HCT116 (cell line): ENCODE measurements at regions of chr1 and their contacts with region 1.

Region 1: GRCh38 chr1:32448773-32449456 is 16.0 kb upstream of the ZBTB8B start:
- DNase-seq: peak; percentile 68
- ATAC-seq: peak; percentile 79
- H3K4me3 ChIP-seq: peak overlapping the region; percentile 16 to 36
- H3K27ac ChIP-seq: peak overlapping the region; percentile 47
- H3K4me1 ChIP-seq: peaks cover 22 to 36% of the 10 kb centered on the region in 2 experiments
- H3K27me3 ChIP-seq: no peaks in the 10 kb centered on the region
- CTCF ChIP-seq: peak; percentile 55 to 79 (median 69); a peak in 5 of 6 replicates
- POLR2A ChIP-seq: peak; percentile 91
- RAD21 ChIP-seq: peak; percentile 70

Region 2: GRCh38 chr1:32186077-32186476 is 262.8 kb before region 1 on chr1:
- CTCF ChIA-PET with region 1: no interaction called
- POLR2A ChIA-PET with region 1: no interaction called
- RAD21 ChIA-PET with region 1: no interaction called
- intact Hi-C with region 1: no loop called
- DNase-seq: no peak
- ATAC-seq: no peak
- H3K4me3 ChIP-seq: no peak overlapping the region
- H3K27ac ChIP-seq: no peak overlapping the region
- H3K4me1 ChIP-seq: peaks cover 2 to 11% of the 10 kb centered on the region in 2 experiments
- H3K27me3 ChIP-seq: no peaks in the 10 kb centered on the region
- CTCF ChIP-seq: no peak
- POLR2A ChIP-seq: no peak
- RAD21 ChIP-seq: no peak

Region 3: GRCh38 chr1:32500387-32501209 is 51.7 kb after region 1 on chr1:
- CTCF ChIA-PET with region 1: interaction called, 3 read pairs
- POLR2A ChIA-PET with region 1: interaction called, 6 read pairs
- RAD21 ChIA-PET with region 1: no interaction called
- intact Hi-C with region 1: loop called (anchors 5 kb)
- DNase-seq: no peak
- ATAC-seq: peak; percentile 89
- H3K4me3 ChIP-seq: peak overlapping the region; percentile 59 to 66
- H3K27ac ChIP-seq: peak overlapping the region; percentile 94
- H3K4me1 ChIP-seq: peaks cover 9 to 17% of the 10 kb centered on the region in 2 experiments
- H3K27me3 ChIP-seq: no peaks in the 10 kb centered on the region
- CTCF ChIP-seq: no peak
- POLR2A ChIP-seq: peak; percentile 17
- RAD21 ChIP-seq: no peak

Region 4: DNA sequence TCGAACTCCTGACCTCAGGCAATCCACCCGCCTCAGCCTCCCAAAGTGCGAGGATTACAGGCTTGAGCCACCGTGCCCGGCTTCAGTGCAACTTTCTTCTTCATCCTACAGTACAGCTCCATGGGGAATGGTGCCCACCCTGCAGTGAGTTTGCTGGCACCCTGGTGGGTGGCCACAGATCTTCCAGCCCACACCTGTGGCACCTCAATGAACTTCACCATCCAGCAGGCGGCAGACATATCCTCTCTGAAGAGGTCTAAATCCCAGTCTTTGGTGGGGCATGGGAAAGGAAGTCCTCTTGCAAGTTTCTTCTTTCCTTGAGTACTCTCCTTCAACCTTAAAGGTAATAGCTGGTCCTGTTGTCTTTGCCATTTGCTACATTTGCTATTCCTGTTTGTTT is 72.2 kb after region 1 on chr1:
- CTCF ChIA-PET with region 1: interaction called, 14 read pairs
- POLR2A ChIA-PET with region 1: interaction called, 3 read pairs
- RAD21 ChIA-PET with region 1: interaction called in 1 of 2 experiments, 5 read pairs
- intact Hi-C with region 1: no loop called
- DNase-seq: no peak
- ATAC-seq: peak; percentile 43
- H3K4me3 ChIP-seq: no peak overlapping the region
- H3K27ac ChIP-seq: no peak overlapping the region
- H3K4me1 ChIP-seq: peaks cover 7 to 8% of the 10 kb centered on the region in 2 experiments
- H3K27me3 ChIP-seq: no peaks in the 10 kb centered on the region
- CTCF ChIP-seq: no peak
- POLR2A ChIP-seq: no peak
- RAD21 ChIP-seq: 0 out of 2 replicates have a peak, but pooled peaks have one; percentile 15

Region 5: GRCh38 chr1:32538887-32539583 is 90.1 kb after region 1 on chr1 and contains the start of gene ZBTB8A:
- CTCF ChIA-PET with region 1: no interaction called
- POLR2A ChIA-PET with region 1: no interaction called
- RAD21 ChIA-PET with region 1: no interaction called
- intact Hi-C with region 1: loop called (anchors 5 kb)
- DNase-seq: peak; percentile 54
- ATAC-seq: peak; percentile 70
- H3K4me3 ChIP-seq: peak within 1 kb of the TSS; percentile 68 to 78
- H3K27ac ChIP-seq: peak within 1 kb of the TSS; percentile 88
- H3K4me1 ChIP-seq: peaks cover 15 to 23% of the 10 kb centered on the region in 2 experiments
- H3K27me3 ChIP-seq: no peaks in the 10 kb centered on the region
- CTCF ChIP-seq: no peak
- POLR2A ChIP-seq: peak; percentile 67
- RAD21 ChIP-seq: no peak
- total RNA-seq, gene ZBTB8A: 9.7 TPM

Region 6: DNA sequence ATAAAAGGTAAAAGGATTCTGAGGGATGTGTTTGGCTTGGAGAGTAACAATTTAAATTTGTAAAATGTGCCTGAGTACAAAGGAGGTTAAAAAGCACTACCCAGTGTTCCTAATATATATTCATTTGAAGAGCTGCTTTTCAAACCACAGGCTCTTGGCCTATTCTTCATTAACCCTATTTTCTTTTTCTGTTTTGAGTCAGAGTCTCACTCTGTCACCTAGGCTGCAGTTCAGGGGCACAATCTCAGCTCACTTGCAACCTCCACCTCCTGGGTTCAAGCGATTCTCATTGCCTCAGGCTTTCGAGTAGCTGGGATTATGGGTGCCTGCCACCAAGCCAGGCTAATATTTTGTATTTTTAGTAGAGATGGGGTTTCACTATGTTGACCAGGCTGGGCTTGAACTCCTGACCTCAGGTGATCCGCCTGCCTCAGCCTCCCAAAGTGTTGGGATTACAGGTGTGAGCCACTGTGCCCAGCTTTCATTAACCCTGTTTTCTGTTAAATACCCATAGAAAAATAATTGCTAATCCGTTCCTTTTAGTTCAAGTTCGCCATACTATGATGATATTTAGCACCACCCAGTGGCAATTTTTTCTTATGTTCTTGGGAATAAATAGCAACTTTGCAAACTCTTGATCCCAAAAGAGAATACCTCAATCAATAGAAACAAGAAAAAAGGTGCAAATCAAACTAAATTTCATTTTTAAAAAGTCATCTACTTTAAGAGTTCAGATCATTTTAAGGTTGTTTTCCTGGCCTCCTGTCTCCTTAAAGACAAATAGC is 171.0 kb after region 1 on chr1:
- CTCF ChIA-PET with region 1: interaction called, 5 read pairs
- POLR2A ChIA-PET with region 1: no interaction called
- RAD21 ChIA-PET with region 1: no interaction called
- intact Hi-C with region 1: loop called (anchors 1 kb)
- DNase-seq: no peak
- ATAC-seq: no peak
- H3K4me3 ChIP-seq: no peak overlapping the region
- H3K27ac ChIP-seq: no peak overlapping the region
- H3K4me1 ChIP-seq: no peaks in the 10 kb centered on the region
- H3K27me3 ChIP-seq: no peaks in the 10 kb centered on the region
- CTCF ChIP-seq: peak in 2 of 3 experiments; percentile 40 to 44; a peak in 3 of 6 replicates
- POLR2A ChIP-seq: no peak
- RAD21 ChIP-seq: peak; percentile 55

Region 7: GRCh38 chr1:32650752-32651460 is 202.0 kb after region 1 on chr1 and contains the start of gene RBBP4:
- CTCF ChIA-PET with region 1: interaction called, 6 read pairs
- POLR2A ChIA-PET with region 1: interaction called, 8 read pairs
- RAD21 ChIA-PET with region 1: no interaction called
- intact Hi-C with region 1: loop called (anchors 1 kb)
- DNase-seq: peak; percentile 91
- ATAC-seq: peak; percentile 90
- H3K4me3 ChIP-seq: peak within 1 kb of the TSS; percentile 89 to 99
- H3K27ac ChIP-seq: peak within 1 kb of the TSS; percentile 95
- H3K4me1 ChIP-seq: peaks cover 11 to 25% of the 10 kb centered on the region in 2 experiments; a peak in 3 of 4 replicates
- H3K27me3 ChIP-seq: no peaks in the 10 kb centered on the region
- CTCF ChIP-seq: no peak
- POLR2A ChIP-seq: peak; percentile 14
- RAD21 ChIP-seq: no peak
- total RNA-seq, gene RBBP4: 279 TPM

Region 8: DNA sequence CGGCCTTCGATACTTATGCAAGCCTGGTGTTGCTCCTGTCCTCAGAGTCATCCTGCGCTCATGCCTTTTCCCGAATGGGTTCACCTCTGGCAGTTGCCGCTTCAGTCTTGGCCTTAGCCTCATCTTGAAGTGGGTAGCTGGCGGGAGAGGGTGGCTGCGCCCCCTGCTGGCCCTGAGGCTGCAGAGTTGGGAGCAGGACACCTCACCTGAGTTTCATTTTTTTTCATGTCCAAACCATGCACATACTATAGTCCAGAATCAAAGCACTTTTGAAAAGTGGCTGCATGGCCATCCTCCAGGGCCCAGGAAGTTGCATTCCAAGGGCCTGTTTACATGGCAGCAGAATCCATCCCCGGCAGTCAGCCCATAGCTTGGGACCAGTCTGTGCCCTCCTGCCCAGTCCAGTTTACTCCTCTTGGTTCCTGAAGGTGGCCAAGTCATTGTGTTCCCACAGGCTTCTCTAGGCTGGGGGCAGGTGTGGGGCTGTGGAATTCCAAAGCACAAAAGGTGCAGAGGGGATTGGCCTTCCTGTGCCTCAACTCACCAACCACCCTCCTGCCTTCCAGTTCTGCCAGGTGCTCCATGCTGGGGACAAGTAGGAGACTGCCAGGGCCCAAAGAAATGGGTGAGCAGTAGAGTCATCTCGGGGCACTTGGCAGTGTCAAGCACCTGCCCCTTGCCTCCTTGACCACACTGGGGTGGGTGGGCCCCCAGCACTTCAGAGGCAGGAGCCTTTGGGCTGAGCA is 324.3 kb after region 1 on chr1:
- CTCF ChIA-PET with region 1: interaction called, 3 read pairs
- POLR2A ChIA-PET with region 1: interaction called, 3 read pairs
- RAD21 ChIA-PET with region 1: no interaction called
- intact Hi-C with region 1: loop called (anchors 2 kb)
- DNase-seq: peak; percentile 61
- ATAC-seq: peak; percentile 85
- H3K4me3 ChIP-seq: no peak overlapping the region
- H3K27ac ChIP-seq: peak overlapping the region; percentile 25
- H3K4me1 ChIP-seq: peaks cover 22 to 39% of the 10 kb centered on the region in 2 experiments
- H3K27me3 ChIP-seq: no peaks in the 10 kb centered on the region
- CTCF ChIP-seq: peak; percentile 96 to 98 (median 97)
- POLR2A ChIP-seq: no peak
- RAD21 ChIP-seq: peak; percentile 99